AG04449 (cell line): ENCODE measurements at regions of chr1 and their contacts with region 1.

Region 1: GRCh38 chr1:228471762-228472398 is 15.3 kb upstream of the RNF187 start:
- DNase-seq: no peak
- H3K4me3 ChIP-seq: no peak overlapping the region
- CTCF ChIP-seq: no peak

Region 2: GRCh38 chr1:228457396-228458176 is 14.3 kb before region 1 on chr1:
- CTCF ChIA-PET with region 1: interaction called, 17 read pairs
- POLR2A ChIA-PET with region 1: no interaction called
- DNase-seq: peak; percentile 92
- H3K4me3 ChIP-seq: peak overlapping the region; percentile 69
- CTCF ChIP-seq: peak; percentile 43